OCI-LY7 (cell line): ENCODE measurements at regions of chr17 and their contacts with region 1.

Region 1: DNA sequence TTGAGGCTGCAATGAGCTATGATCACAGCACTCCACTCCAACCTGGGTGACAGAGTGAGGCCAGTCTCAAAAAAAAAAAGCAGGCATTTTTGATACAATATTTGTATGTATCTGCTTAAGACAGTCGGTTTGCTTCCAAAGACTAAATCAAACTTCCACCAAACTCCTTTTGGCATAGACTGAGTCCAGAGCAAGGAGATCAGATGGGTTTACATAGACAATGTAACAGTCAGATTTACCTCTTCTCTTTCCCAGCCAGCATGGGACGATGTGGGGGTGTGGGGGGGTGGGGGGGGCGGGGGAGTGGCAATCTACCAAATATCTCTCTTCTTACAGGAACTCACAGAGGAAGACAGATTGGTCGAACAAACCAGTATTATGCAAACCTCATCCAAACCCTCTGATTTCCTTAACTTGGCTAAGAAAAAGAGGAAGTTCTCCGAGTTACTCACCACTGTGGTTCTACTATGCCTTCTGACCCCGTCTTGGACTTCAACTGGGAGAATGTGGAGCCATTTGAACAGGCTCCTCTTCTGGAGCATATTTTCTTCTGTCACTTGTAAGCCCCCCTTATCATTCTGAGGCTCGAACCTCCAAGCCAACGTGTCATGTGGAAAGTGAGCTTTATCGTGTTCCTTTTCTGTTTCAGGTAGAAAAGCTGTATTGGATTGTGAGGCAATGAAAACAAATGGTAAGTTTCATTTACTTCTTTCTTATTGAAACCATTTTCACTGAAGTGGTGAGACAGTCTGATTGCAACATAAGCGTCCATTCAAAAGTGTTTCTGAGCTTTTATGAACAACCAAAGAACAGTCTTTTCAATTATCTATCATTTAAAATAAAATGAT is at the start of gene MILR1:
- DNase-seq: peak; percentile 92
- H3K4me3 ChIP-seq: peak within 1 kb of the TSS; percentile 76
- H3K27ac ChIP-seq: peak within 1 kb of the TSS; percentile 86
- H3K4me1 ChIP-seq: peaks cover 42% of the 10 kb centered on the region
- CTCF ChIP-seq: no peak
- total RNA-seq, gene MILR1: 68.7 and 73.6 TPM in 2 replicates

Region 2: DNA sequence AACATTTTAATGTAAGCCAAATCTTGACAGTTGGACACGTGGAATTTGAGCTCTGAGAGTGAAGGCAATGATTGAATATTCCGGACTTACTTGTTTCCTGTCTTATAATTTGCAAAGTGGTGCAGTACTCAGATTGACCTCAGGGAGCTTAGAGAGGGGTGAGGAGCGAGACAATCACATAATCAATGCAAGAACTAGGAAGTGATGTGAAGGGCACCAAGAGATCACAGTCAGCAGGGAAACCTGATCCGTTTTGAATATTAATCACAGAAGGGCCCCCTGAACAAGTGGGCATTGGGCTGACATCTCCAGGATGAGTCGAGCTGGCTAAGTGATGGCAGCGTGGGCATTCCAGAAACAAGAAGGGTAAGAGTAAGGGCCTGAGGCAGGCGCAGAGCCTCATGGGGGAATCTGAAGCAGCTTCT is 212.0 kb before region 1 on chr17:
- CTCF ChIA-PET with region 1: no interaction called
- POLR2A ChIA-PET with region 1: no interaction called
- intact Hi-C with region 1: no loop called
- DNase-seq: no peak
- H3K4me3 ChIP-seq: no peak overlapping the region
- H3K27ac ChIP-seq: no peak overlapping the region
- H3K4me1 ChIP-seq: peaks cover 3% of the 10 kb centered on the region
- CTCF ChIP-seq: peak; percentile 57

Region 3: GRCh38 chr17:64506576-64507477 is 57.9 kb after region 1 on chr17 and contains the start of gene CEP95:
- CTCF ChIA-PET with region 1: no interaction called
- POLR2A ChIA-PET with region 1: interaction called, 11 read pairs
- intact Hi-C with region 1: no loop called
- DNase-seq: peak; percentile 97
- H3K4me3 ChIP-seq: peak within 1 kb of the TSS; percentile 100
- H3K27ac ChIP-seq: peak within 1 kb of the TSS; percentile 90
- H3K4me1 ChIP-seq: peaks cover 34% of the 10 kb centered on the region
- CTCF ChIP-seq: no peak
- total RNA-seq, gene CEP95: 62.7 and 87.9 TPM in 2 replicates